ENCODE measurements at regions of chr12 and their contacts with region 1.

Region 1: DNA sequence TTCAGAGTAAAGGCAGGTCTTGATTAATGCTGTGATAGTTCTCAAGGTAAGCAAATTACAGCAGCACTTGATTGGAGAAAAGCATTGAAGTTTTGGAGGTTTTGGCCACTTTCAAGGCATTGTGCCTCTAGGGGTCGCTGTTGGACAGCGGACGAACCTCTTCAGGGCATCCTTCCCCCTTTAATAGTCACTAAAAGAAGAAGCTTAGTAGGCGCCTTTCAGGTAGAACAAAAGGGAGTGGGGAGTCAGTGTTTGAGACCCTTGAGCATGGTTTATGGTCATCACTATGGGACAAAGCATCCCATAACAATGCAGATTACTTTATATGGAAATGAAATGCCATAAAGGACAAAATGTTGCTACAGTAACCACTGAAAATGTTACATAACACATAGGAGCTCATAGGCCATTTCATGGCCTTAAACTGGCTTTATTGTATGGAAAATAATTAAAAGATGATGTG is 199.5 kb upstream of the DCN start:
- DNase-seq: peak; percentile 67 to 89 (median 78)
- ATAC-seq: peak; percentile 94
- H3K4me3 ChIP-seq: peak overlapping the region; percentile 18
- H3K4me3 Mint-ChIP-seq: peak overlapping the region; percentile 69 to 91 (median 81)
- H3K27ac ChIP-seq: no peak overlapping the region
- H3K27ac Mint-ChIP-seq: peak overlapping the region in 8 of 9 donors; percentile 16 to 85 (median 49)
- H3K4me1 ChIP-seq: no peaks in the 10 kb centered on the region
- H3K4me1 Mint-ChIP-seq: peaks cover 0 to 11% (median 6%) of the 10 kb centered on the region in 7 donors
- H3K27me3 ChIP-seq: no peaks in the 10 kb centered on the region
- H3K27me3 Mint-ChIP-seq: peaks cover 0 to 13% (median 0%) of the 10 kb centered on the region in 5 donors

Region 2: DNA sequence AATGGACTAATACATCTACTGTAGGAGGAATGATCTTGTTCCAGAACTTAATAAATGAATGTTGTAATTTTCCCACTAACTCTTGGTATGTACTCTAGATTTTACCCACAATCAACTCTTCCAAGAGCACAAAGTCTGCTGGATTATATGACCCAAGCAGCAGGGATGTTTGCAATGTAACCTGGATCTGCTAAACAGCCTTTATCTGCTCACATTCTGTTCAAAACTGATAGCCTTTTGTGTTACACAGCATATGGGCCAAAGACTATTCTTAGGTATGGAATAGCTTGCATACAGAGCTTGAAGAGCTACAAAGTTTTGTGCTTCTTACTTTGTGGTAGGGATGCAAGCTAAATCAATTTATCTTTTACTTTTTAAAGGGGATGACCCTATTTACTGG is 14.2 kb after region 1 on chr12:
- CTCF ChIA-PET with region 1: interaction called, 11 read pairs
- POLR2A ChIA-PET with region 1: no interaction called
- intact Hi-C with region 1: no loop called
- DNase-seq: no peak
- ATAC-seq: no peak
- H3K4me3 ChIP-seq: no peak overlapping the region
- H3K4me3 Mint-ChIP-seq: no peak overlapping the region
- H3K27ac ChIP-seq: no peak overlapping the region
- H3K27ac Mint-ChIP-seq: no peak overlapping the region
- H3K4me1 ChIP-seq: no peaks in the 10 kb centered on the region
- H3K4me1 Mint-ChIP-seq: peaks cover 0 to 6% (median 0%) of the 10 kb centered on the region in 7 donors
- H3K27me3 ChIP-seq: no peaks in the 10 kb centered on the region
- H3K27me3 Mint-ChIP-seq: peaks cover 0 to 7% (median 0%) of the 10 kb centered on the region in 5 donors

Region 3: DNA sequence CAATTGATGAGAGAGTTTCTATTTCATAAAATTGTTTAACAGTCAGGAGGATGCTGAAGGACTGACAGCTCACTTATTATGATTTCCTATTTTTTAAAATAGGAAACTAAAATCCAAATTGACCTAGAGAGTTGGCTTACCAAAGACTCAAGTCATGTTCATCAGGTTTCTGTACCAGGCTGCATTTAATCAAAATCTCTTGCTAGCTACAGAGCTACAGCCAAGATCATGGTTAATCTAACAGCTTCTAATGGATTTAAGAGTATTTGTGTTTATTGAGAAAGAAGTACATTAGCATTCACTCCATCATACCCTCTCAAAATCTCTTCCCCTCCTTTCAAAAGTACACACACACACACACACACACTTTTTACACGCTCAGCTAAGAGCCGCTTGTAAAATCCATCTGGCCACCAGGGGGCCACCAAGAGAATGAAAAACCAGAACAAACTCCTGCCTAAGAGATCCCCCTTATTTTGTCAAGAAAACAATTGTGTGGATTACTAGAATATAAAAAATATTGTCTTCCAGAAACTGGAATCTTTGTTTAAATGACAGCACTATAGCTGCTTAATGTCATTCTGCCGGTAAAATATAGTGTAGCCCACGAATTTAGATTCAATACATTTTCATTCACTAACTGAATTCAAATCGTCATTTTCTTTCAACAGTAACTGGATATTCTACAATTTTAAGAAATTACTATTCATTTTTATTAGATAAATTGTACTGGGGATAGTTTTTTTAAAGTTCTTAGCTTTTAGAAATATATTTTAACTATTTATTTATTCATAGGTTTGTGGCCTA is 429.6 kb after region 1 on chr12:
- CTCF ChIA-PET with region 1: no interaction called
- POLR2A ChIA-PET with region 1: no interaction called
- intact Hi-C with region 1: loop called (anchors 1 to 5 kb)
- DNase-seq: peak; percentile 64 to 79 (median 70)
- ATAC-seq: peak; percentile 90
- H3K4me3 ChIP-seq: peak overlapping the region; percentile 37
- H3K4me3 Mint-ChIP-seq: peak overlapping the region in 9 of 10 donors; percentile 31 to 80 (median 52)
- H3K27ac ChIP-seq: peak overlapping the region; percentile 22
- H3K27ac Mint-ChIP-seq: peak overlapping the region in 8 of 9 donors; percentile 81 to 97 (median 86)
- H3K4me1 ChIP-seq: peaks cover 0 to 15% of the 10 kb centered on the region in 2 donors
- H3K4me1 Mint-ChIP-seq: peaks cover 10 to 48% (median 35%) of the 10 kb centered on the region in 7 donors
- H3K27me3 ChIP-seq: no peaks in the 10 kb centered on the region
- H3K27me3 Mint-ChIP-seq: no peaks in the 10 kb centered on the region

Region 4: GRCh38 chr12:92208613-92209121 is 826.6 kb after region 1 on chr12:
- CTCF ChIA-PET with region 1: no interaction called
- POLR2A ChIA-PET with region 1: no interaction called
- intact Hi-C with region 1: loop called in 1 of 2 experiments (anchors 1 kb)
- DNase-seq: peak in 7 of 9 donors; percentile 55 to 76 (median 63)
- ATAC-seq: peak; percentile 92
- H3K4me3 ChIP-seq: peak overlapping the region; percentile 29
- H3K4me3 Mint-ChIP-seq: peak overlapping the region; percentile 58 to 90 (median 76)
- H3K27ac ChIP-seq: peak overlapping the region; percentile 48
- H3K27ac Mint-ChIP-seq: peak overlapping the region; percentile 72 to 97 (median 95)
- H3K4me1 ChIP-seq: peaks cover 18 to 25% of the 10 kb centered on the region in 2 donors
- H3K4me1 Mint-ChIP-seq: peaks cover 19 to 55% (median 41%) of the 10 kb centered on the region in 7 donors
- H3K27me3 ChIP-seq: no peaks in the 10 kb centered on the region
- H3K27me3 Mint-ChIP-seq: no peaks in the 10 kb centered on the region

Region 5: DNA sequence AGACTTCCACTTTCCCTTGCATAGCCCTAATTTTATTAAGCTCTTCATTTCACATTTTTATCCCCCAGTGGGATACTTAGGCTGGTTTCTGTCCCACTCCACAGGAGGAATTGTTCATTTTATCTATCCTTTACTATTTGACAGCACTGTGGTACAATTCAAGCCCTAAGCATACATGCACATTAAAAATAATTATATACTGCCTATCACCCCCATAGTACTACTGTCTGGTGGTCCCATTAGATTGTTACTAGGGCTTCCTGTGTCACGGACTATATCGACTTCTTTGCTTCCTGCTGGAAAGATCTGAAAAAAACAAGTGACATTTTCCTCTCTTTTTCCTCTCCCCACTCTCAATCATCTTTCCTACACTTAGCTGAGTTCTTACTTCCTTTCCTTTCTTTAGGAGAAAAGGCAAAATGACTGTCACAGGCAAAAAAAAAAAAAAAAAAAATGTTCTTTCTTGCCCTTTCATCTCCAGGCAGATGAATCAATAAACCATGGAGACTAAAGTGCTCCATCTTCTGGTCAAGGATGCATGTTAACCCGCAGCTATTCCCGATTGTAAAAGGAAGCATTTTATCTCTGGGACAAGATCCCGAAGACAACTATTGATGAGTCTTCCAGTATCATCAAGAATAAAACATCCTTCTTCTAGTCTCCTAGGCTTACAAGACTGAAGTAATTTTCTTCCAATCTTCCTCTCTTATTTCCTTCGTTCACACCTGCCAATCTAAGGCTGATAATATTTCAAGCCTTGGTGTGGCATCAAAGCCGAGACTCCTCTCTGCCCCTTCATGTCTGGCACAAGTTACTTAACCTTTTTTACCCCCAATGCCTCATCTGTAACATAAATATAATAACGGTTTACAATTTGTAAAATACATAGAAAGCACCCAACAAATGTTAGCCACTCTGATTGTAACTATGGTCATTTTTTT is 1226.3 kb after region 1 on chr12:
- CTCF ChIA-PET with region 1: interaction called, 11 read pairs
- POLR2A ChIA-PET with region 1: interaction called, 4 read pairs
- intact Hi-C with region 1: loop called (anchors 1 kb)
- DNase-seq: peak in 2 of 9 donors; percentile 6 to 34
- ATAC-seq: peak; percentile 32
- H3K4me3 ChIP-seq: no peak overlapping the region
- H3K4me3 Mint-ChIP-seq: peak overlapping the region in 8 of 10 donors; percentile 10 to 79 (median 66)
- H3K27ac ChIP-seq: no peak overlapping the region
- H3K27ac Mint-ChIP-seq: peak overlapping the region in 7 of 9 donors; percentile 24 to 89 (median 68)
- H3K4me1 ChIP-seq: no peaks in the 10 kb centered on the region
- H3K4me1 Mint-ChIP-seq: peaks cover 9 to 20% (median 12%) of the 10 kb centered on the region in 7 donors
- H3K27me3 ChIP-seq: no peaks in the 10 kb centered on the region
- H3K27me3 Mint-ChIP-seq: no peaks in the 10 kb centered on the region

Region 6: DNA sequence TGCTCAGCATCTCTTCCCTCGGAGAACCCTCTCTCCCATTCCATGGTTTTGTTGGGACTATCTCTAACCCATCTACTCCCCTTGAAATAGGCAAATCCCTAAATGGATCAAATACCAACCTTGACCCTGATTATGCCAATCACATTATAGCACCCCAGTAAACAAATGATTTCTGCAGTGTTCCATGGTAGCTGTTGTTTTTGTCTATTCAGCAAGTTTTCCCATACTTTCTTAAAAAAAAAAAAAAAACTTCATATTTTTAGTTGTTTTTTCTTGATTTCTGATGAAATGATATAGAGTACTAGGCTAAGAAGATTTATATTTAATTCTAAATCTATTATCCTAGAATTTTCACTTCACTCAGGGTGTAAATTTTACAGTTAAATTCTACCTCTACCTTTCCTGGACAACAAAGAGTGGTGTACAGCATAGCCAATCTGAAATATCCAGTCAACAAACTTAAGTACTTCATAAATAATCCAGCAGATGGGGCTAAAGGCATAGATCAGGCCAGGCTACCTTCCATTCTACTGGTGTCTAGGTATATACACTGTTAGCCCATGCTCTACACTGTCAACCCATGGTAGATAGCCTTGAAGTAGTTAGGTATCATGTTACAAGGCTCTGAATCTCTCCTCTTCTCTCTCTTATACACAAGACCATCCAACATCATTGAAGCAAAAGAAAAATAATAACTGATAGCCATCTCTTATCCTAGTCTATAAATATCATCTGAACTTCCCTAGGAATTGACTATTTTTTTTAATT is 1402.9 kb after region 1 on chr12:
- CTCF ChIA-PET with region 1: no interaction called
- POLR2A ChIA-PET with region 1: no interaction called
- intact Hi-C with region 1: loop called in 1 of 2 experiments (anchors 10 kb)
- DNase-seq: peak in 7 of 9 donors; percentile 61 to 80 (median 70)
- ATAC-seq: peak; percentile 99
- H3K4me3 ChIP-seq: no peak overlapping the region
- H3K4me3 Mint-ChIP-seq: no peak overlapping the region
- H3K27ac ChIP-seq: no peak overlapping the region
- H3K27ac Mint-ChIP-seq: peak overlapping the region in 1 of 9 donors; percentile 0
- H3K4me1 ChIP-seq: no peaks in the 10 kb centered on the region
- H3K4me1 Mint-ChIP-seq: peaks cover 4 to 19% (median 9%) of the 10 kb centered on the region in 7 donors
- H3K27me3 ChIP-seq: no peaks in the 10 kb centered on the region
- H3K27me3 Mint-ChIP-seq: no peaks in the 10 kb centered on the region